ENCODE measurements at regions of chr13 and their contacts with region 1.

Region 1: DNA sequence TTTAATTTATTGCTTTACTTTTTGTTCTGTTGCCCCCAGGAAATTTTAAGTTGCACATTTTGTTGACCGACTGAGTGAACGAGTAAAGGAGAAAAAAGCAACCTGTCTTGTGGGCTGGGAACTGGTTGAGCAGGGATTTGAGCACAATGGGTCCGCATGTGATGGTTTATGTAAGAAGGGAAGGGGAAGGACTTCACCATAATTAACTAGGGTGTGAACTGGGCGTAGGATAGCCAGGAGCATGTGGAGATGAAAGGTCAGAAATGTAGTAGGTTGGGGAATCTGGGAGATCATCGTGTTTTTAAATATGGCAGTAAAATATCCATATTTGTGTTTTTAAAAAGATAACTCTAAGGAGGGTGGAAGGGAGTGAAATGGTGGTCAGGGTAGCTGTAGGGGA is 99.9 kb downstream of the GPC5 start:
- DNase-seq: no peak
- ATAC-seq: no peak
- H3K4me3 ChIP-seq: no peak overlapping the region
- H3K27ac ChIP-seq: no peak overlapping the region
- H3K4me1 ChIP-seq: no peaks in the 10 kb centered on the region
- H3K27me3 ChIP-seq: no peaks in the 10 kb centered on the region
- CTCF ChIP-seq: no peak
- EP300 ChIP-seq: no peak
- POLR2A ChIP-seq: no peak
- RAD21 ChIP-seq: no peak

Region 2: DNA sequence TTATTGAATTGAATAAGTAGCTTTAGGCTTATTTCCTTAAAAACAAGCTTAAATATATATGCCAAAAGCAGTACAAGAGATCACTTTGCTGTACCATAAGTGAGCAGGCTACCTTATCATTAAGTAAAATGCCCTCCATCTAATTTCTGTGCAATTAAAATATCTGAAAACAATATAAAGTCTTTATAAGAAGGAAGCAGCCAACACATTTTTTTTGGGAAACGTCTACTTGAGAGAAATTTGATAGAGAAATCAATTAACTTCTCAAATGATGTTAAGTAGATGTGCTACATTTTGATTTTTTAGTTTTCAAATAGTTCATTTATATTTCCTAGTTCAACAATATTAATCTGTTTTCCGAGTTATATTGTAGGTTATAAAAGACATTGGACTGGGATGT is 47.4 kb before region 1 on chr13:
- CTCF ChIA-PET with region 1: no interaction called
- POLR2A ChIA-PET with region 1: no interaction called
- RAD21 ChIA-PET with region 1: no interaction called
- SMC1A ChIA-PET with region 1: no interaction called
- in situ Hi-C with region 1: no loop called
- intact Hi-C with region 1: loop called (anchors 5 kb)
- DNase-seq: no peak
- ATAC-seq: no peak
- H3K4me3 ChIP-seq: no peak overlapping the region
- H3K27ac ChIP-seq: no peak overlapping the region
- H3K4me1 ChIP-seq: no peaks in the 10 kb centered on the region
- H3K27me3 ChIP-seq: no peaks in the 10 kb centered on the region
- CTCF ChIP-seq: no peak
- EP300 ChIP-seq: no peak
- POLR2A ChIP-seq: no peak
- RAD21 ChIP-seq: no peak

Region 3: DNA sequence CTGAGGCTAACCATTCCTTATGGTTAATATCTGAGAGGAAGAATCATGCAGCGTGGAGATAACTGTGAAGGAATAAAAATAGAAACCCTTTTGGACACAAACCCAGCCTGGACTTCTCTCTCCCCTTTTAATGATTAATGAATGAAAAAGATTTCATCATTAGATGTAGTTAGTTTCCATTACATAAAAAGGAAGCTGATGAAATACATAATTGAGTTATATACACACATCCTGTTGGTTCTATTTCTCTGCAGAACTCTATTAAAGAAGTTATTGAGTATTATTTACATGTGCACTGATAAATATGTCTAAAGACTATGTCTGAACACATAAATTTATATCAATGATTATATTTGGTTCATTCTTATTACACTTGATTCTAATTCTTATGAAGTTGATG is 365.4 kb after region 1 on chr13:
- CTCF ChIA-PET with region 1: no interaction called
- POLR2A ChIA-PET with region 1: no interaction called
- RAD21 ChIA-PET with region 1: no interaction called
- SMC1A ChIA-PET with region 1: no interaction called
- in situ Hi-C with region 1: no loop called
- intact Hi-C with region 1: no loop called
- DNase-seq: no peak
- ATAC-seq: no peak
- H3K4me3 ChIP-seq: no peak overlapping the region
- H3K27ac ChIP-seq: no peak overlapping the region
- H3K4me1 ChIP-seq: no peaks in the 10 kb centered on the region
- H3K27me3 ChIP-seq: no peaks in the 10 kb centered on the region
- CTCF ChIP-seq: no peak
- EP300 ChIP-seq: no peak
- POLR2A ChIP-seq: no peak
- RAD21 ChIP-seq: no peak

Measured in GM12878 (cell line).